ENCODE measurements at regions of chr2 and their contacts with region 1.

Region 1: GRCh38 chr2:101831351-101831865 is 133.9 kb downstream of the MAP4K4 start:
- DNase-seq: peak; percentile 49 to 67 (median 57)
- H3K4me3 ChIP-seq: no peak overlapping the region
- H3K4me3 Mint-ChIP-seq: peak overlapping the region in 4 of 8 donors; percentile 18 to 64 (median 32)
- H3K27ac ChIP-seq: no peak overlapping the region
- H3K27ac Mint-ChIP-seq: peak overlapping the region in 5 of 7 donors; percentile 15 to 77 (median 44)
- H3K4me1 ChIP-seq: peaks cover 53% of the 10 kb centered on the region
- H3K4me1 Mint-ChIP-seq: peaks cover 46 to 52% (median 51%) of the 10 kb centered on the region in 4 donors
- H3K27me3 ChIP-seq: no peaks in the 10 kb centered on the region
- H3K27me3 Mint-ChIP-seq: no peaks in the 10 kb centered on the region

Region 2: DNA sequence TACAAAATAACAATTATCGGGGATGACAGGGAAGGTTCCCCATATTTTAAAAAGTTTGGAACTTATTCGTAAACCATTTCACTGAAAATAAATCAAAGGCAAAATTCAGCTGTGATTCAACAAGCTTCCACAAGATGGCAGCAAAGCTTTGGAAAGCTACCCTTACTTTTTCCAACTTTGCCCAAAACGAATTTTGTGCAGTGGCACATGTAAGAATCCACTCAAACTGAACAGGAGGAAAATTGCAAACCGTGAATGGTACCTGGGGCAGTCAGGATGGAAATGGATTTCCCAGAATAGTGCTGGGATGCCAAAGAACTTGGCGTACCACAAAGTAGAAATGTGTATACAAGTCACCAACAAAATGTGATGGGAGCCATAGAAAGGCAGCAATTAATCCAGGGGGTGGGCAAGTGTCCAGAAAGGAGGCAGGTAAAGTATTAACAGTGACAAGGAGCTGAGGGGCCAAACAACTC is 818.7 kb before region 1 on chr2:
- CTCF ChIA-PET with region 1: no interaction called
- POLR2A ChIA-PET with region 1: no interaction called
- intact Hi-C with region 1: loop called (anchors 5 kb)
- DNase-seq: peak in 4 of 5 donors; percentile 24 to 51 (median 37)
- H3K4me3 ChIP-seq: no peak overlapping the region
- H3K4me3 Mint-ChIP-seq: no peak overlapping the region
- H3K27ac ChIP-seq: no peak overlapping the region
- H3K27ac Mint-ChIP-seq: peak overlapping the region in 2 of 7 donors; percentile 30 to 55
- H3K4me1 ChIP-seq: no peaks in the 10 kb centered on the region
- H3K4me1 Mint-ChIP-seq: peaks cover 8 to 18% (median 12%) of the 10 kb centered on the region in 4 donors
- H3K27me3 ChIP-seq: no peaks in the 10 kb centered on the region
- H3K27me3 Mint-ChIP-seq: no peaks in the 10 kb centered on the region

Region 3: DNA sequence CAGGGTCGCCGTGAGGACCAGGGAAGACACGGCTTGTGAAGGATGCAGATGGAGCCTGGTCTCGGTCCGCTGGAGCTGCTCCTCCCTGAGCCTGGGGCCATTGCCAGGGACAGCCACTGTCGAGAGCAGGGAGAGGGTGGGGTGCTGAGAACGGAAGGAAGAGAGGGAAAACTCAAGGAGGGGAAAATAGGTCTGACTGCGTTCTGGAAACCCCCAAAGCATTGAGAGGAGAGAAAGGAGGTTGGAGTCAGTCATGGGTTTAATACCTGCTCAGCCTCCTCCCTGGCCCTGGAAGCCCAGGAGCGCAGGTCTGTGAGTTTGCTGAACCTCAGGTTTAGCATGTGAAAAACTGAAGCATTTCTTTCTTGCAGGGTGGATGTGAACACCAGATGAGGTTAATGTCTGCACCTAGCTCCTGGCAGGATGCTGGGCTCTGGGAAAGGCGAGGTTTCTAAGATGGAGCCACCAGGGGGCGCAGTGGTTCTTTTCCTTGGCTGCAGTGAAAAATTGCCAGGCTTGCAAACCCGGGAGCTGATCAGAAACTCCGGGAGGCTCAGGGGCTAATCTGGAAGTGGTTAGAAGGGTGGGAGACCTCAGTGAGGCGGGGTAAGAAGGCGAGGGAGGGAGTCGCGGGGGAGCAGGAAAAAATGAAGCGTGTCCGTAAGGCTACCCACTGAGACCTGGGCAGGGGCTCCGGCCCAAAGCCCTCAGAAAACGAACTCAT is 489.3 kb before region 1 on chr2:
- CTCF ChIA-PET with region 1: interaction called, 8 read pairs
- POLR2A ChIA-PET with region 1: no interaction called
- intact Hi-C with region 1: loop called (anchors 1 kb)
- DNase-seq: peak; percentile 59 to 66 (median 62)
- H3K4me3 ChIP-seq: no peak overlapping the region
- H3K4me3 Mint-ChIP-seq: peak overlapping the region in 4 of 8 donors; percentile 21 to 58 (median 34)
- H3K27ac ChIP-seq: no peak overlapping the region
- H3K27ac Mint-ChIP-seq: peak overlapping the region in 5 of 7 donors; percentile 25 to 75 (median 65)
- H3K4me1 ChIP-seq: peaks cover 26% of the 10 kb centered on the region
- H3K4me1 Mint-ChIP-seq: peaks cover 21 to 33% (median 29%) of the 10 kb centered on the region in 4 donors
- H3K27me3 ChIP-seq: no peaks in the 10 kb centered on the region
- H3K27me3 Mint-ChIP-seq: no peaks in the 10 kb centered on the region

Region 4: GRCh38 chr2:101419096-101419663 is 412.2 kb before region 1 on chr2:
- CTCF ChIA-PET with region 1: interaction called, 163 read pairs
- POLR2A ChIA-PET with region 1: interaction called, 9 read pairs
- intact Hi-C with region 1: loop called (anchors 1 kb)
- DNase-seq: peak; percentile 59 to 66 (median 64)
- H3K4me3 ChIP-seq: no peak overlapping the region
- H3K4me3 Mint-ChIP-seq: no peak overlapping the region
- H3K27ac ChIP-seq: no peak overlapping the region
- H3K27ac Mint-ChIP-seq: no peak overlapping the region
- H3K4me1 ChIP-seq: no peaks in the 10 kb centered on the region
- H3K4me1 Mint-ChIP-seq: no peaks in the 10 kb centered on the region
- H3K27me3 ChIP-seq: no peaks in the 10 kb centered on the region
- H3K27me3 Mint-ChIP-seq: no peaks in the 10 kb centered on the region

Region 5: GRCh38 chr2:101653469-101653868 is 177.9 kb before region 1 on chr2:
- CTCF ChIA-PET with region 1: interaction called, 4 read pairs
- POLR2A ChIA-PET with region 1: no interaction called
- intact Hi-C with region 1: loop called (anchors 5 kb)
- DNase-seq: no peak
- H3K4me3 ChIP-seq: no peak overlapping the region
- H3K4me3 Mint-ChIP-seq: no peak overlapping the region
- H3K27ac ChIP-seq: no peak overlapping the region
- H3K27ac Mint-ChIP-seq: peak overlapping the region in 4 of 7 donors; percentile 1 to 59 (median 28)
- H3K4me1 ChIP-seq: peaks cover 23% of the 10 kb centered on the region
- H3K4me1 Mint-ChIP-seq: peaks cover 14 to 32% (median 20%) of the 10 kb centered on the region in 4 donors
- H3K27me3 ChIP-seq: no peaks in the 10 kb centered on the region
- H3K27me3 Mint-ChIP-seq: no peaks in the 10 kb centered on the region

Region 6: GRCh38 chr2:101704046-101704466 is 127.4 kb before region 1 on chr2:
- CTCF ChIA-PET with region 1: interaction called, 14 read pairs
- POLR2A ChIA-PET with region 1: interaction called, 19 read pairs
- intact Hi-C with region 1: no loop called
- DNase-seq: peak in 3 of 5 donors; percentile 44 to 45 (median 44)
- H3K4me3 ChIP-seq: no peak overlapping the region
- H3K4me3 Mint-ChIP-seq: peak overlapping the region; percentile 64 to 94 (median 90)
- H3K27ac ChIP-seq: peak overlapping the region; percentile 58
- H3K27ac Mint-ChIP-seq: peak overlapping the region; percentile 90 to 99 (median 96)
- H3K4me1 ChIP-seq: peaks cover 95% of the 10 kb centered on the region
- H3K4me1 Mint-ChIP-seq: peaks cover 12 to 67% (median 54%) of the 10 kb centered on the region in 4 donors
- H3K27me3 ChIP-seq: no peaks in the 10 kb centered on the region
- H3K27me3 Mint-ChIP-seq: no peaks in the 10 kb centered on the region

Region 7: GRCh38 chr2:101770726-101771125 is 60.7 kb before region 1 on chr2:
- CTCF ChIA-PET with region 1: interaction called, 17 read pairs
- POLR2A ChIA-PET with region 1: interaction called, 4 read pairs
- intact Hi-C with region 1: no loop called
- DNase-seq: no peak
- H3K4me3 ChIP-seq: no peak overlapping the region
- H3K4me3 Mint-ChIP-seq: peak overlapping the region in 4 of 8 donors; percentile 27 to 66 (median 54)
- H3K27ac ChIP-seq: no peak overlapping the region
- H3K27ac Mint-ChIP-seq: peak overlapping the region in 2 of 7 donors; percentile 12 to 57
- H3K4me1 ChIP-seq: peaks cover 90% of the 10 kb centered on the region
- H3K4me1 Mint-ChIP-seq: peaks cover 69 to 95% (median 82%) of the 10 kb centered on the region in 4 donors
- H3K27me3 ChIP-seq: no peaks in the 10 kb centered on the region
- H3K27me3 Mint-ChIP-seq: no peaks in the 10 kb centered on the region